AG04449 (cell line): ENCODE measurements at regions of chr11 and their contacts with region 1.

Region 1: GRCh38 chr11:64204464-64204989 is 2.0 kb upstream of the FERMT3 start:
- DNase-seq: peak; percentile 74
- H3K4me3 ChIP-seq: no peak overlapping the region
- CTCF ChIP-seq: peak; percentile 83

Region 2: GRCh38 chr11:63974259-63975143 is 230.0 kb before region 1 on chr11 and contains the start of gene COX8A:
- CTCF ChIA-PET with region 1: no interaction called
- POLR2A ChIA-PET with region 1: no interaction called
- DNase-seq: peak; percentile 98
- H3K4me3 ChIP-seq: peak within 1 kb of the TSS; percentile 98
- CTCF ChIP-seq: peak; percentile 31

Region 3: GRCh38 chr11:64141081-64141783 is 63.3 kb before region 1 on chr11:
- CTCF ChIA-PET with region 1: no interaction called
- POLR2A ChIA-PET with region 1: no interaction called
- DNase-seq: no peak
- H3K4me3 ChIP-seq: no peak overlapping the region
- CTCF ChIP-seq: no peak

Region 4: DNA sequence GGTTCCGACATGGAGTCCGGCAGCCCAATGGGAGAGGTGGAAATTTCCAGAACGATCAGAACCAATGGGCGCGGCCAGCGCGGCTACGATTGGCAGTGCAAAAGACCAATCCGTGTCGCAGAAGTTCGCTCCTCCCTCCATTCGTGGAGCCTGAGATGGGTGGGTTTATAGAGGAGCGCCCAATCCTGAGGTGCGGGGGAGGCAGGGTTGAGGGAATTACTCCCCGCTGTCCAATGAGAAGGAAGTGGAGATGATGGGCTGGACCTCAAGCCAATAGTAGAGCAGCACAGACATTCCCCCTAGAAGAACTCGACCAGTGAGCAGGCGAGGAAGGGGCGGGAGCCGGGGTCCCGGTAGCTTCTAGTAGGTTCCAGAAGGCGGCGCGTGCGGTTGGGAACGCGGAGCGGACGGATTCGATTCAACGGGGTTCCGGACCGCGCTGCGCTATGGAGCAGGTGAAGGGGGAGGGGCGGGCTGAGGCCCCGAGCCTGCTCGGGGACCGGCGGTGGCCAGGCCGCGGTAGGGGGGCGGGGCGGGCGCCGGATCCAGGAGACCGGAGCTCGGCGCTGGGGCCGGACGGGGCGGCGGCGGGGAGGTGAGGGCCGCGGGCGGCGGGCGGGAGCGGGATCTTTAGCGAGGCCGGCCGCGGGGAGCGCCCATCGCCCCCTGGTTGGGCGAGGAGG is 18.6 kb before region 1 on chr11 and contains the start of gene STIP1:
- CTCF ChIA-PET with region 1: interaction called, 121 read pairs
- POLR2A ChIA-PET with region 1: interaction called, 10 read pairs
- DNase-seq: peak; percentile 100
- H3K4me3 ChIP-seq: peak within 1 kb of the TSS; percentile 71
- CTCF ChIP-seq: peak; percentile 69

Region 5: DNA sequence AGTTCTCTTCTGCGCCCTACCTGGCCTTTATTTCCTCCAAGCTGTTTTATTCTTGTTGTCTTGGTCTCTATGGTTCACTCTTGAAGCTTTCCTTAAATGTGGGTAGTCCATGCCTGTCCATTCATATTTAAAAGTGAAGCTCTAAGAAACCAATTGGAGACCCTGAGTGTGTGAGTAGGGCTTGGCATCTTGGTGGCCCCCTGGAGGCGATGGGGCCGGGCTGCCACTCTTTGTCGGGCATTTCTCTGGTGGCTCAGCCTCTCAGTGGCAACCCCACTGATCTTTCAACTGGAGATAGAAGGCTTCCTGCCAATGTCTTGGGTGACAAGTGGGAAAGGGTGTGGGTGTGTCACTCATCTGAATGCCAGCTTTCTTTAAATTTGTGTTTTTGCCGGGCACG is 12.4 kb after region 1 on chr11:
- CTCF ChIA-PET with region 1: interaction called, 86 read pairs
- POLR2A ChIA-PET with region 1: interaction called, 5 read pairs
- DNase-seq: no peak
- H3K4me3 ChIP-seq: no peak overlapping the region
- CTCF ChIP-seq: no peak

Region 6: GRCh38 chr11:64225612-64226506 is 21.3 kb after region 1 on chr11 and contains the starts of genes NUDT22 and TRPT1:
- CTCF ChIA-PET with region 1: interaction called, 56 read pairs
- POLR2A ChIA-PET with region 1: interaction called, 3 read pairs
- DNase-seq: no peak
- H3K4me3 ChIP-seq: peak within 1 kb of the TSS; percentile 91
- CTCF ChIP-seq: peak; percentile 27

Region 7: GRCh38 chr11:64281957-64282770 is 77.6 kb after region 1 on chr11:
- CTCF ChIA-PET with region 1: no interaction called
- POLR2A ChIA-PET with region 1: no interaction called
- DNase-seq: no peak
- H3K4me3 ChIP-seq: no peak overlapping the region
- CTCF ChIP-seq: no peak

Region 8: GRCh38 chr11:64331557-64332371 is 127.2 kb after region 1 on chr11:
- CTCF ChIA-PET with region 1: interaction called, 15 read pairs
- POLR2A ChIA-PET with region 1: no interaction called
- DNase-seq: peak; percentile 21
- H3K4me3 ChIP-seq: no peak overlapping the region
- CTCF ChIP-seq: peak; percentile 77